AG04450 (cell line): ENCODE measurements at regions of chr1 and their contacts with region 1.

Region 1: GRCh38 chr1:203871107-203871875 is 9.9 kb downstream of the SNRPE start:
- DNase-seq: peak; percentile 62
- H3K4me3 ChIP-seq: no peak overlapping the region
- H3K27ac ChIP-seq: no peak overlapping the region
- H3K27me3 ChIP-seq: no peaks in the 10 kb centered on the region
- CTCF ChIP-seq: peak; percentile 99

Region 2: DNA sequence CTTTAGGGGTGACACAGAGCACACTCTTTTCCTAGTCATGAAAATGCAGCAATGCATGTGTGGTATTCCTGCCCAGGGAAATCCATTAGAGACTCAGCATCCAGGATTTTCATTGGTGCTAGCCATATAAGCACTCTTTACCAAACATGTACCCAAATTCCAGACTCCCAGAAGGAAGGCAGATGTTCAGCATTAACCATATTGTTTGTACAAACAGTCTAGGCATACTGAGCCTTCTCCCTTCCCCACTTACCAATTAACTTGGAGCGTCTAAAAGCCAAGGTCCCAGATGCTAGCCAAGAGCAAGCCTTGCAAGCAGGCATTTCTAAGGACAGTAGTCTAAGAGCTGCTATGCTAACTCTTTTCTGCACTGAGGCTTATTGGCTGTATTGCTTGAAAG is 48.0 kb before region 1 on chr1:
- CTCF ChIA-PET with region 1: no interaction called
- POLR2A ChIA-PET with region 1: no interaction called
- DNase-seq: no peak
- H3K4me3 ChIP-seq: no peak overlapping the region
- H3K27ac ChIP-seq: no peak overlapping the region
- H3K27me3 ChIP-seq: no peaks in the 10 kb centered on the region
- CTCF ChIP-seq: no peak

Region 3: GRCh38 chr1:203888807-203889251 is 17.5 kb after region 1 on chr1:
- CTCF ChIA-PET with region 1: interaction called, 14 read pairs
- POLR2A ChIA-PET with region 1: no interaction called
- DNase-seq: no peak
- H3K4me3 ChIP-seq: no peak overlapping the region
- H3K27ac ChIP-seq: peak overlapping the region; percentile 53
- H3K27me3 ChIP-seq: no peaks in the 10 kb centered on the region
- CTCF ChIP-seq: no peak

Region 4: DNA sequence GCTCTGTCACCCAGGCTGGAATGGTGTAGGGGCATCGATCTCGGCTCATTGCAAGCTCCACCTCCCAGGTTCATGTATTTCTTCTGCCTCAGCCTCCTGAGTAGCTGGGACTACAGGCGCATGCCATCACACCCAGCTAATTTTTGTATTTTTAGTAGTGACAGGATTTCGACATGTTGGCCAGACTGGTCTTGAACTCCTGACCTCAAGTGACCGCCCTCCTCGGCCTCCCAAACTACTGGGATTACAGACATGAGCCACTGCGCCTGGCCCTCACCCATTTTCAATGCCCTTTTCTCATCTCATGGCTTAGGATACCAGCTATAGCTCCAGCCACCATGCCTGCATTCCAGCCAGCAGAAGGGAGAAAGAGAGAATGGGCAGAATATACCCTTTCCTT is 188.7 kb after region 1 on chr1:
- CTCF ChIA-PET with region 1: interaction called, 10 read pairs
- POLR2A ChIA-PET with region 1: no interaction called
- DNase-seq: no peak
- H3K4me3 ChIP-seq: no peak overlapping the region
- H3K27ac ChIP-seq: no peak overlapping the region
- H3K27me3 ChIP-seq: peaks cover 3% of the 10 kb centered on the region
- CTCF ChIP-seq: no peak

Region 5: GRCh38 chr1:204098683-204099082 is 227.4 kb after region 1 on chr1:
- CTCF ChIA-PET with region 1: interaction called, 14 read pairs
- POLR2A ChIA-PET with region 1: no interaction called
- DNase-seq: no peak
- H3K4me3 ChIP-seq: no peak overlapping the region
- H3K27ac ChIP-seq: no peak overlapping the region
- H3K27me3 ChIP-seq: peaks cover 11% of the 10 kb centered on the region
- CTCF ChIP-seq: no peak

Region 6: DNA sequence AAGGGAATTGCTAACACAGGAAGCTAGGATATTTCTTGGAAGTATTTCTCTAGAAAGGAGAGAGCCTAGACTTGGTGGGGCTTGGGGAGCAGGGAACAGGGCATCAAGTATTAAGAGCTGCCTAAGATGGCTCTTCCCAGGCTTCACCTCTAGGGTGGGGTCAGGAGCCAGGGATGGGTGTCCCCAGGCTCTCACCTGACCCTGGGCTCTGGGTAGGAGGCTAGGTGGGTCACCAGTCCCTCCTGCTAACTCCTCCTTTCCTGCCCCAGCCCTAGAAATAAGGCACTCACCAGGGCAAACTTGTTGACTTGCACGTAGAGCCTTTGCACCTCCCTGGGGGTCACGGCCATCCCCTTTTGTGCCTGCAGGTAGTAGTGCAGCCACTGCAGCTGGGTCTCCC is 265.5 kb after region 1 on chr1:
- CTCF ChIA-PET with region 1: interaction called, 479 read pairs
- POLR2A ChIA-PET with region 1: no interaction called
- DNase-seq: no peak
- H3K4me3 ChIP-seq: no peak overlapping the region
- H3K27ac ChIP-seq: no peak overlapping the region
- H3K27me3 ChIP-seq: no peaks in the 10 kb centered on the region
- CTCF ChIP-seq: no peak